ENCODE measurements at regions of chr1 and their contacts with region 1.

Region 1: GRCh38 chr1:39609618-39610331 is 29.7 kb downstream of the HEYL start:
- DNase-seq: peak; percentile 74
- H3K4me3 Mint-ChIP-seq: no peak overlapping the region
- H3K27ac Mint-ChIP-seq: no peak overlapping the region
- H3K4me1 Mint-ChIP-seq: peaks cover 8% of the 10 kb centered on the region
- H3K27me3 Mint-ChIP-seq: peaks cover 35% of the 10 kb centered on the region

Region 2: DNA sequence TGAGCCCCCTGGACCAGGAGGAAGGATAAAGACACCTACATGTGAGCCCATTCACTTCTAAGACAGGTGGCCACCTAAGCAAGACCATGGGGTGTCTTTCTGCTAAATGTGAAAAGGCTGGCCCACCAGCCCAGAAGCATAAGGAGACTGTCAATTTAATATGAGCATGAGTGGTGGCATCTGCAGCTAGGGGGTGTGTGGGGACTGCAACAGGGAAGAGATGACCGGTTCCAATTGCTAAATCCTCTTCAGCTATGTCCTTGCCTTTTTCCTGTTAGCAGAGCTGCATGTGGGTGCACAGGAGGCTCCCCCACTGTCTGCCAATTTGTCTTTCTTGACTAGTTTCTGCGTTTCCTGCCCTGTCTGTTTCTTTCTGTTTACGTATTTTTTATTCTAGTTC is 140.6 kb before region 1 on chr1:
- CTCF ChIA-PET with region 1: no interaction called
- DNase-seq: no peak
- H3K4me3 Mint-ChIP-seq: no peak overlapping the region
- H3K27ac Mint-ChIP-seq: peak overlapping the region; percentile 4
- H3K4me1 Mint-ChIP-seq: no peaks in the 10 kb centered on the region
- H3K27me3 Mint-ChIP-seq: no peaks in the 10 kb centered on the region

Region 3: GRCh38 chr1:39596163-39596562 is 13.6 kb before region 1 on chr1:
- CTCF ChIA-PET with region 1: interaction called, 16 read pairs
- DNase-seq: no peak
- H3K4me3 Mint-ChIP-seq: no peak overlapping the region
- H3K27ac Mint-ChIP-seq: no peak overlapping the region
- H3K4me1 Mint-ChIP-seq: no peaks in the 10 kb centered on the region
- H3K27me3 Mint-ChIP-seq: peaks cover 28% of the 10 kb centered on the region

Region 4: GRCh38 chr1:39623053-39623452 is 13.3 kb after region 1 on chr1:
- CTCF ChIA-PET with region 1: interaction called, 13 read pairs
- DNase-seq: no peak
- H3K4me3 Mint-ChIP-seq: no peak overlapping the region
- H3K27ac Mint-ChIP-seq: no peak overlapping the region
- H3K4me1 Mint-ChIP-seq: no peaks in the 10 kb centered on the region
- H3K27me3 Mint-ChIP-seq: peaks cover 29% of the 10 kb centered on the region

Region 5: DNA sequence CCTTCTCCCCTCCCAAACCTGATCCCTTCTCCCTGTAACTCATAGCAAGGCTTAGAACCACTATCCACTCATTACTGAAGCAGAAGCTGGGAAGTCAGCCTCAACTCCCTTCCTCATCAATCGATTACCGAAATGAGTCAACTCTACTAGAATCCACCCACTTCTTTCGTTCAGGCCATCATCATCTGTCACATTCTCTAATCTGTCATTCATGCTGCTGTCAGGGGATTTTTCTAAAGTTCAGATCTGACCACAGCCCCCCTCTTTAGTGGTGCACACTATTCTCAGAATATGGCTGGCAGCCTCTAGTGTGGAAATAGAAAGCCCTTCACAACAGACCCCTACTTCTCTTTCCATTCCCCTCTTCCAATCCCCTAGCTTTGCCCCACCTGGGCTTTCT is 57.0 kb after region 1 on chr1:
- CTCF ChIA-PET with region 1: interaction called, 126 read pairs
- DNase-seq: no peak
- H3K4me3 Mint-ChIP-seq: no peak overlapping the region
- H3K27ac Mint-ChIP-seq: no peak overlapping the region
- H3K4me1 Mint-ChIP-seq: peaks cover 11% of the 10 kb centered on the region
- H3K27me3 Mint-ChIP-seq: peaks cover 54% of the 10 kb centered on the region

Region 6: DNA sequence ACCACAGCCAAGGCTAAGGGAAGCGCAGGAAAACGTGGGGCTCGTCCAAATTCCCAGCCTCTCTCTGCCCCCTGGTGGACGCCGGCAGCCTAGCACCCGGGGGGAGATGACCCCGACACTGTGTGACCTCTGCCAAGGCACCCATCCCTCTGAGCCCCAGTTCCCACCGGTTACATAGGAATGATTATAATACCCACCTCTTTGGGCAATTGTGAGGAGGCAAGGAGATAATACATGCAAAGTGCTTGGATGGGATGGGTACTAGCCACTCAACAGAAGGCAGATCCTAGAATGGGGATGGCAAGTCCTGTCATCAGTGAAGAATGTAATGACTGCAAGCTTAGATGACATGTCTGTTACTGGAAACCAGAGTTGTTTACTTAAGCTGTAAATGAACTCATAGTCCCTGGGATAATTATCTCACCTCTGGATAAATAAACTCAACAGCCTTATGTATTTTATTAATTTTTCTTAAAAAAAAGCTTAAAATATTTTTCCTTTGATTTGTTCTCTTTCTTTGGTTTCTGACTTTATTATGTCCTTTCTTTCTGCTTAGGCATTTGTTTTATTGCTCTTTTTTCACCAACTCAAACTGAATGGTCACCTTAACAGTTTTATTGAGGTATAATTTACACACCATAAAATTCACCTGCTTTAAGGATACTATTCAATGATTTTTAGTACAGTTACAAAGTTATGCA is 190.1 kb after region 1 on chr1:
- CTCF ChIA-PET with region 1: interaction called, 15 read pairs
- DNase-seq: peak; percentile 72
- H3K4me3 Mint-ChIP-seq: peak overlapping the region; percentile 54
- H3K27ac Mint-ChIP-seq: peak overlapping the region; percentile 89
- H3K4me1 Mint-ChIP-seq: peaks cover 13% of the 10 kb centered on the region
- H3K27me3 Mint-ChIP-seq: peaks cover 11% of the 10 kb centered on the region